Tibial artery (tissue), 4 donors: ENCODE measurements at regions of chr20 and their contacts with region 1.

Region 1: GRCh38 chr20:45337367-45338120 is 10.7 kb downstream of the SDC4 start:
- DNase-seq: peak in 1 of 2 donors; percentile 86
- H3K4me3 ChIP-seq: no peak overlapping the region
- H3K27ac ChIP-seq: peak overlapping the region; percentile 86 to 98
- H3K4me1 ChIP-seq: peaks cover 5 to 74% (median 65%) of the 10 kb centered on the region in 4 donors
- H3K27me3 ChIP-seq: no peaks in the 10 kb centered on the region
- CTCF ChIP-seq: no peak

Region 2: GRCh38 chr20:44601801-44602204 is 735.7 kb before region 1 on chr20:
- intact Hi-C with region 1: loop called (anchors 5 kb)
- DNase-seq: peak; percentile 87 to 92
- H3K4me3 ChIP-seq: peak overlapping the region in 1 of 2 donors; percentile 26
- H3K27ac ChIP-seq: peak overlapping the region; percentile 81 to 89
- H3K4me1 ChIP-seq: peaks cover 7 to 69% (median 62%) of the 10 kb centered on the region in 4 donors
- H3K27me3 ChIP-seq: no peaks in the 10 kb centered on the region
- CTCF ChIP-seq: no peak

Region 3: GRCh38 chr20:45088247-45088646 is 249.3 kb before region 1 on chr20:
- intact Hi-C with region 1: no loop called
- DNase-seq: no peak
- H3K4me3 ChIP-seq: no peak overlapping the region
- H3K27ac ChIP-seq: no peak overlapping the region
- H3K4me1 ChIP-seq: no peaks in the 10 kb centered on the region
- H3K27me3 ChIP-seq: no peaks in the 10 kb centered on the region
- CTCF ChIP-seq: no peak

Region 4: GRCh38 chr20:45290677-45291355 is 46.7 kb before region 1 on chr20:
- intact Hi-C with region 1: no loop called
- DNase-seq: peak; percentile 84 to 85
- H3K4me3 ChIP-seq: no peak overlapping the region
- H3K27ac ChIP-seq: no peak overlapping the region
- H3K4me1 ChIP-seq: peaks cover 0 to 15% (median 11%) of the 10 kb centered on the region in 4 donors
- H3K27me3 ChIP-seq: peaks cover 0 to 17% of the 10 kb centered on the region in 2 donors
- CTCF ChIP-seq: peak; percentile 66 to 67

Region 5: DNA sequence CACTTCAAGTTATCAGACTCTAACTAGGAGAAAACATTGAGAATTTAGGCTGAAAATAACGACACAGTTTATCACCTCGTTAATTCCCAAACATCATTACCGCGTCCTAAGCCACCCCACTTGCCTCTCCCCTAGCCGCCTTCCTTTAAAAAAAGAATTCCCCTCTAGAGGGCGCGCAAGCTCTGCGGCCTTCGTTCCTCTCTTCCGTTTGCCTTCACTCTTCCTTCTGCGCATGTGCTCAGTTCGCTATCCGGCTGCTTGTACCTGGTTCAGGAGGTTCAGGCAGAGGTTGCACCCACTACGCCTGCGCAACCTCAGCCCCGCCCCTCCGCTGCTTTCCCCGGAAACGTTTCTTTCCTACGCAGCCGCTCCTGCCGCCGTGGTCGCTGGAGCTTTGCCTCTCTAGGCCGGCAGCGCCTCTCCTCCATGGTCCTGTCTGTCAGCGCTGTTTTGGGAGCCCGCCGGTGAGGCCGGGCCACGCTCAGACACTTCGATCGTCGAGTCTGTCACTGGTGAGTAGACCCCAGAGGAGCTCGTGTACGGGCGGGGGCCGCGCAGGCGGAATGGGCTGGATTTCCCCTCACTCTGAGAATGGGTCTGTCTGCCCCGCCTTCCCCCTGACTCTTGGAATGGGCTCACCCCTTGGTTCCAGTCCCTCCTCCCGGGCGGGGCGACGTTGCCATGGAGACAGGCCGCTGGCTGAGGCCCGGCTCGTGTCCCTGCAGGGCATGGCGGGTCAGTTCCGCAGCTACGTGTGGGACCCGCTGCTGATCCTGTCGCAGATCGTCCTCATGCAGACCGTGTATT is 25.5 kb after region 1 on chr20 and contains the start of gene SYS1:
- intact Hi-C with region 1: loop called (anchors 2 kb)
- DNase-seq: peak; percentile 98 to 99
- H3K4me3 ChIP-seq: peak within 1 kb of the TSS; percentile 60 to 71
- H3K27ac ChIP-seq: peak within 1 kb of the TSS; percentile 86 to 88
- H3K4me1 ChIP-seq: peaks cover 0 to 50% (median 35%) of the 10 kb centered on the region in 4 donors
- H3K27me3 ChIP-seq: no peaks in the 10 kb centered on the region
- CTCF ChIP-seq: peak; percentile 91 to 94

Region 6: GRCh38 chr20:45402946-45403345 is 65.4 kb after region 1 on chr20:
- intact Hi-C with region 1: no loop called
- DNase-seq: no peak
- H3K4me3 ChIP-seq: no peak overlapping the region
- H3K27ac ChIP-seq: no peak overlapping the region
- H3K4me1 ChIP-seq: peaks cover 0 to 9% (median 3%) of the 10 kb centered on the region in 4 donors
- H3K27me3 ChIP-seq: no peaks in the 10 kb centered on the region
- CTCF ChIP-seq: no peak

Region 7: GRCh38 chr20:45518282-45518681 is 180.7 kb after region 1 on chr20:
- intact Hi-C with region 1: no loop called
- DNase-seq: no peak
- H3K4me3 ChIP-seq: no peak overlapping the region
- H3K27ac ChIP-seq: no peak overlapping the region
- H3K4me1 ChIP-seq: no peaks in the 10 kb centered on the region
- H3K27me3 ChIP-seq: peaks cover 0 to 2% of the 10 kb centered on the region in 2 donors
- CTCF ChIP-seq: no peak